ENCODE measurements at regions of chr15 and their contacts with region 1.

Region 1: DNA sequence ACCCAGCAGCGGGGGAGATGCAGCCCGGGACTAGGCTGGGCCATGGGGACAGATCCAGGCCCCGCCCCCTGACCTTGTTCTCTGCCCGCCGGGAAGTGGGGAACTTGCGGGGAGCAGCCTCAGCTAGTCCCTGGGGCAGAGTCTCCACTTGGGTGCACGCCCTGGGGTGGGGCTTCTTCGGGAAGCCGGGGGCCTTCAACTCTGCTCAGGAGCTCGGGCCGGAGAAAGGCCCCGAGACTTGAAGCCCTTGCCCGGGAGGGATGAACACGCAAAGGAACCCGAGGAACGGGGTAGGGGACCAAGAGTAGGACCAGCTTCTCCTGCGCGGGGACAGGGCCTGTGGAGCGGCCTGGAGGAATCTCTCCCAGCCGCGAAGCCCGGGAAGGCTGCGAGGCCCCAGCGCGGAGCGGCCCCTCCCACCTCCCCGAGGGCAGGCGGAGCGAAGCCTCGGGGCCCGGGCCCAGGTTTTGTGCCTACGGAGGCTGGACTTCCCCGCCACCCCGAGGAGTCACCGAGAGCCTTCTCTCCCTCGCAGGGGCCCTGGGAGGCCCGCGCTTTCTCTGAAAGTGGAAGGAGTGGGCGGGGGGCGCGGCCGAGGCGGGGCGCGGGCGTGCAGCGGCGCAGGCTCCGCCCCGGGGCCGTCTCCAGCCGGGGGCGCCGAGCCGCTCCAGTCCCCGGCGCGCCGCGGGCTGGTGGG is at the start of gene ITPKA:
- DNase-seq: peak; percentile 95
- H3K4me3 Mint-ChIP-seq: peak within 1 kb of the TSS; percentile 67
- H3K27ac Mint-ChIP-seq: peak within 1 kb of the TSS; percentile 61
- H3K4me1 Mint-ChIP-seq: peaks cover 36% of the 10 kb centered on the region
- H3K27me3 Mint-ChIP-seq: peaks cover 31% of the 10 kb centered on the region
- total RNA-seq, gene ITPKA: 3.5 to 4.7 TPM

Region 2: DNA sequence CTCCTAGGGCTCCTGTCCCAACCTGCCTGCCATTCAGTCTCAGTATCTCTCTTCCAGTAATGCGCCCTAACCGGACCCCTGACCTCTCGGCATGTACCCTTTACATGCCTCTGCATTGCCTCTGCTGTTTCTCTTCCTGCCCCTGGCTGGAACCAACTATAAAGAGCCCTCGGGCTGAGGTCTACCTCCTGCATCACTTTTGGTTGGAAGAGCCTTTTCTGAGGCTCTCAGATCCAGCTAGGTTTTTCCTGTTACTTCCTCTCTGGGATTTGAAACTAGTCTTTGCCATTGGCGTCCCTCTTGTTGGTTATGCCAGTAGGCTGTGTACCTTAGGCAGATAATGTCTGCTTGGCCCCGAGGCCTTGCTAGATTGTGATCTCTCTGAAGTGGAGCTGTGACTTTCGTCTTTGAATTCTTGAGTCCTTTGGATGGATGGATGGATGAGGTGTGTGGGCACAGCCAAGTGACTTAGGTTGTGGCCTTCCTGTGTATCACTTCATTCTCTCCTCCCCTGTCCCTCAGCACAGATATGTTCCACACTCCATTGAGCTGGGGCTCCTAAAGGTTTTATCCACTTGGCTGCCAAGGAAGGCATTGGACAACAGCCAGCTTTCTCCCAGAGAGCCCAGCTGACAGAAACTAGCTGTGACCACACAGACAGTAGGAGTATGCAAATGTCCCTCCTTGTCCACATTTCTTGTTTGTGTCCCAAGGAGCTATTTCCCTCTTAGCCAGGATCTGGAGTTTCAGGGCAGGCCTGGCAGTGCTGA is 678.3 kb before region 1 on chr15:
- CTCF ChIA-PET with region 1: no interaction called
- POLR2A ChIA-PET with region 1: no interaction called
- intact Hi-C with region 1: no loop called
- DNase-seq: no peak
- H3K4me3 Mint-ChIP-seq: no peak overlapping the region
- H3K27ac Mint-ChIP-seq: no peak overlapping the region
- H3K4me1 Mint-ChIP-seq: no peaks in the 10 kb centered on the region
- H3K27me3 Mint-ChIP-seq: no peaks in the 10 kb centered on the region

Region 3: DNA sequence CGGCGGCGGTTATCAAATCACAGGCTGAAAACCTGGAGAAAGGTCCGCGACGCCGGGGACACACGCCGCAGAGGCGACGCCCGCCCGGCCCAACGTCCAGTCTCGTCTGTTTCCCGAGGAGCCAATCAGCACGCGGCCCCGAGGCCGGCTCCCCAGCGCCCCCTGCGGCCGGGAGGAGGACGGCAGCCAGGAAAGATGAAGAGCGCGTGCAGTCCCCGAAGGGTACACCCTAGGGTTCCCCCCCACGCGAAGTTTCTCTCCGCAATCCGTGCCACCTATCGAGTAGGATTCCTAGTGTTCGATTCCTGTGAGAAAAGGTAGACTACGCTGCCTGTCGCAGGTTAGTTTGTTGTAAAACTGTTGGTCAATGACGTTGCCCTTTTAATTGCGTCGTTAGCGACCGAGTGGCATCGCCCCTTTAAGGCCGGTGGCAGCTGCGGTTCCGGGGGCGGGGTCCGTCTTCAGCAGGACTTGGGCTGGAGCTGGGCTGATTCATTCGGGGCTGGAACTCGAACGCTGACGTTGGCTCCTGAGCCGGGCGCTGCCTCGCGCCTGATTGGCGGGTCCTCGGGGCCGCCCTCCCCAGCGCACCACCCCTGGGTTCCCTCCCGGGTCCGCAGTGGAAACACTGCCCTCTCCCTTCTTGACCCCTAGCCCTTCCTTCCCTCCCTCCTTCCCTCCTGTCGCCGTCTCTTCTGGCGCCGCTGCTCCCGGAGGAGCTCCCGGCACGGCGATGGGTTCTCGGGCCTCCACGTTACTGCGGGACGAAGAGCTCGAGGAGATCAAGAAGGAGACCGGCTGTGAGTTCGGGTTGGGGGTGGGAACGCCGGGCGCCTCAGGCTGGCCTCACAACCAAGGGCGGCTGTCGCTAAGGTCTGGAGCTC is 262.5 kb before region 1 on chr15 and contains the starts of genes CHP1 and EXD1:
- CTCF ChIA-PET with region 1: no interaction called
- POLR2A ChIA-PET with region 1: no interaction called
- intact Hi-C with region 1: loop called (anchors 1 kb)
- DNase-seq: peak; percentile 98
- H3K4me3 Mint-ChIP-seq: peak within 1 kb of the TSS; percentile 89
- H3K27ac Mint-ChIP-seq: peak within 1 kb of the TSS; percentile 81
- H3K4me1 Mint-ChIP-seq: peaks cover 30% of the 10 kb centered on the region
- H3K27me3 Mint-ChIP-seq: no peaks in the 10 kb centered on the region
- total RNA-seq, gene CHP1: 46.3 to 48.7 TPM
- total RNA-seq, gene EXD1: not detected

Region 4: GRCh38 chr15:41377978-41378377 is 115.4 kb before region 1 on chr15:
- CTCF ChIA-PET with region 1: no interaction called
- POLR2A ChIA-PET with region 1: no interaction called
- intact Hi-C with region 1: no loop called
- DNase-seq: no peak
- H3K4me3 Mint-ChIP-seq: no peak overlapping the region
- H3K27ac Mint-ChIP-seq: no peak overlapping the region
- H3K4me1 Mint-ChIP-seq: no peaks in the 10 kb centered on the region
- H3K27me3 Mint-ChIP-seq: no peaks in the 10 kb centered on the region

Region 5: GRCh38 chr15:41416742-41417406 is 76.5 kb before region 1 on chr15 and contains the start of gene RTF1:
- CTCF ChIA-PET with region 1: no interaction called
- POLR2A ChIA-PET with region 1: no interaction called
- intact Hi-C with region 1: loop called (anchors 5 kb)
- DNase-seq: peak; percentile 98
- H3K4me3 Mint-ChIP-seq: peak within 1 kb of the TSS; percentile 88
- H3K27ac Mint-ChIP-seq: peak within 1 kb of the TSS; percentile 83
- H3K4me1 Mint-ChIP-seq: peaks cover 40% of the 10 kb centered on the region
- H3K27me3 Mint-ChIP-seq: no peaks in the 10 kb centered on the region
- total RNA-seq, gene RTF1: 24.9 to 26.2 TPM

Region 6: GRCh38 chr15:41557673-41558399 is 64.5 kb after region 1 on chr15:
- CTCF ChIA-PET with region 1: no interaction called
- POLR2A ChIA-PET with region 1: no interaction called
- intact Hi-C with region 1: loop called (anchors 5 kb)
- DNase-seq: peak; percentile 83
- H3K4me3 Mint-ChIP-seq: peak overlapping the region; percentile 82
- H3K27ac Mint-ChIP-seq: peak overlapping the region; percentile 70
- H3K4me1 Mint-ChIP-seq: peaks cover 17% of the 10 kb centered on the region
- H3K27me3 Mint-ChIP-seq: peaks cover 17% of the 10 kb centered on the region

Region 7: GRCh38 chr15:41660235-41661077 is 167.1 kb after region 1 on chr15 and contains the start of gene MGA:
- CTCF ChIA-PET with region 1: no interaction called
- POLR2A ChIA-PET with region 1: no interaction called
- intact Hi-C with region 1: loop called (anchors 2 kb)
- DNase-seq: peak; percentile 92
- H3K4me3 Mint-ChIP-seq: peak within 1 kb of the TSS; percentile 86
- H3K27ac Mint-ChIP-seq: peak within 1 kb of the TSS; percentile 76
- H3K4me1 Mint-ChIP-seq: peaks cover 39% of the 10 kb centered on the region
- H3K27me3 Mint-ChIP-seq: no peaks in the 10 kb centered on the region
- total RNA-seq, gene MGA: 29.6 to 31.4 TPM

Measured in activated CD4-positive, alpha-beta memory T cell treated with anti-CD3 and anti-CD28 coated beads for 36 hours (primary cell).